Activated CD8-positive, alpha-beta T cell treated with anti-CD3 and anti-CD28 coated beads for 36 hours (primary cell): ENCODE measurements at regions of chr6 and their contacts with region 1.

Region 1: GRCh38 chr6:166775180-166776081 is 148.4 kb upstream of the RPS6KA2 start:
- DNase-seq: peak; percentile 70
- ATAC-seq: peak; percentile 86
- H3K4me3 Mint-ChIP-seq: no peak overlapping the region
- H3K27ac Mint-ChIP-seq: no peak overlapping the region
- H3K4me1 Mint-ChIP-seq: no peaks in the 10 kb centered on the region
- H3K27me3 Mint-ChIP-seq: peaks cover 12% of the 10 kb centered on the region
- CTCF ChIP-seq: peak; percentile 77

Region 2: DNA sequence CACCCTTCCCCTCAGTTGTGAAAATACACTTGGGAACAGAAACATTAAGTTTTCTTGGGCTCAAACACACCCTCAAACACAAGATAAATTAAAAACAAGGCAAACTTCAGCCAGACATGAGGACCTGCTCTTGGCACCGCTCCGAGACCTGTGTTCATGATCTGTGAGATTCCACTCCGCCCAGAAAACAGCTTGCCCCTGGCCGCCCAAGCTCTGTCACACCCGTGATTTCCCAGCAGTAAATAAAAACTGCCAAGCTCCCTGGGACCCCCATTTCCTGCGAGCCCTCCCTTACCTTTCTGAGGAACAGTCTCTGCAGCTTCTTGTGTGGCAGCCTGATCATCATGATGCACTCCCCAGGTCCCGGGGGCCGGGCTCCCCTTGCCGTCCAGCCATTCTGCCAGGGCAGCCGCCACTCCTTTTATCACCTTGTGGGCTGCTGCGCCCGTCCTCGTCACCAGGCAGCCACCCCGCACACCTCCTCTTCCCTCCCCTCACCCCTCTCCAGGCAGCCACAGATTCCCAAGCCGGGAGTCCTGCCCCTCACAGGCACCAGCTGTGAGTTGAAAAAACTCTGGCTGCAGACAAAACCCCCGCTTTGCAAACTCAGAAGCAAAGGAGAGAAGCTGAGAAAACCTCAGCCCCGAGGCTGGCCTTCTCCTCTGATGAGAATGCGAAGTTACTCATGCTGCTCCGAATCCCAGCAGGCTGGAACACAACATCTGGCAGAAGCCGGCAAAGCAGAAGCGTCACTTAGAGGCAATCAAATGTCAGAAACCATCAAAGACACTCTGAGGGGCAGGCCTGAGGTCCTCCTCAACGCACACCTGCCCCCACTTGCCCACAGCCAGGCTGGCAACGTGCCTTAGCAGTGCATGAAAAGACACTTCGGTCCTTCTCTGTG is 17.9 kb before region 1 on chr6:
- CTCF ChIA-PET with region 1: interaction called, 44 read pairs
- POLR2A ChIA-PET with region 1: no interaction called
- intact Hi-C with region 1: no loop called
- DNase-seq: peak; percentile 61
- ATAC-seq: peak; percentile 80
- H3K4me3 Mint-ChIP-seq: peak overlapping the region; percentile 42
- H3K27ac Mint-ChIP-seq: no peak overlapping the region
- H3K4me1 Mint-ChIP-seq: peaks cover 30% of the 10 kb centered on the region
- H3K27me3 Mint-ChIP-seq: peaks cover 18% of the 10 kb centered on the region
- CTCF ChIP-seq: no peak

Region 3: GRCh38 chr6:166809721-166810120 is 34.3 kb after region 1 on chr6:
- CTCF ChIA-PET with region 1: no interaction called
- POLR2A ChIA-PET with region 1: no interaction called
- intact Hi-C with region 1: no loop called
- DNase-seq: no peak
- ATAC-seq: no peak
- H3K4me3 Mint-ChIP-seq: no peak overlapping the region
- H3K27ac Mint-ChIP-seq: no peak overlapping the region
- H3K4me1 Mint-ChIP-seq: no peaks in the 10 kb centered on the region
- H3K27me3 Mint-ChIP-seq: no peaks in the 10 kb centered on the region
- CTCF ChIP-seq: no peak

Region 4: GRCh38 chr6:166877906-166878305 is 102.5 kb after region 1 on chr6:
- CTCF ChIA-PET with region 1: no interaction called
- POLR2A ChIA-PET with region 1: no interaction called
- intact Hi-C with region 1: no loop called
- DNase-seq: no peak
- ATAC-seq: no peak
- H3K4me3 Mint-ChIP-seq: no peak overlapping the region
- H3K27ac Mint-ChIP-seq: no peak overlapping the region
- H3K4me1 Mint-ChIP-seq: no peaks in the 10 kb centered on the region
- H3K27me3 Mint-ChIP-seq: no peaks in the 10 kb centered on the region
- CTCF ChIP-seq: no peak

Region 5: GRCh38 chr6:166956444-166957086 is 181.1 kb after region 1 on chr6 and contains the start of gene RNASET2:
- CTCF ChIA-PET with region 1: interaction called, 14 read pairs
- POLR2A ChIA-PET with region 1: no interaction called
- intact Hi-C with region 1: no loop called
- DNase-seq: peak; percentile 99
- ATAC-seq: peak; percentile 86
- H3K4me3 Mint-ChIP-seq: peak within 1 kb of the TSS; percentile 90
- H3K27ac Mint-ChIP-seq: peak within 1 kb of the TSS; percentile 86
- H3K4me1 Mint-ChIP-seq: peaks cover 66% of the 10 kb centered on the region
- H3K27me3 Mint-ChIP-seq: no peaks in the 10 kb centered on the region
- CTCF ChIP-seq: no peak
- total RNA-seq, gene RNASET2: 69.2 to 70.2 TPM

Region 6: GRCh38 chr6:167141667-167142432 is 366.4 kb after region 1 on chr6:
- CTCF ChIA-PET with region 1: interaction called, 33 read pairs
- POLR2A ChIA-PET with region 1: no interaction called
- intact Hi-C with region 1: loop called (anchors 5 kb)
- DNase-seq: peak; percentile 60
- ATAC-seq: peak; percentile 83
- H3K4me3 Mint-ChIP-seq: no peak overlapping the region
- H3K27ac Mint-ChIP-seq: no peak overlapping the region
- H3K4me1 Mint-ChIP-seq: peaks cover 5% of the 10 kb centered on the region
- H3K27me3 Mint-ChIP-seq: peaks cover 11% of the 10 kb centered on the region
- CTCF ChIP-seq: peak; percentile 84